GM18951 (cell line): ENCODE measurements at regions of chr3 and their contacts with region 1.

Region 1: GRCh38 chr3:19866751-19867347 is 67.2 kb downstream of the EFHB start:
- POLR2A ChIP-seq: no peak

Region 2: GRCh38 chr3:19052874-19053273 is 814.0 kb before region 1 on chr3:
- in situ Hi-C with region 1: no loop called
- POLR2A ChIP-seq: no peak

Region 3: GRCh38 chr3:19357947-19358346 is 508.9 kb before region 1 on chr3:
- in situ Hi-C with region 1: loop called (anchors 10 kb)
- POLR2A ChIP-seq: no peak

Region 4: DNA sequence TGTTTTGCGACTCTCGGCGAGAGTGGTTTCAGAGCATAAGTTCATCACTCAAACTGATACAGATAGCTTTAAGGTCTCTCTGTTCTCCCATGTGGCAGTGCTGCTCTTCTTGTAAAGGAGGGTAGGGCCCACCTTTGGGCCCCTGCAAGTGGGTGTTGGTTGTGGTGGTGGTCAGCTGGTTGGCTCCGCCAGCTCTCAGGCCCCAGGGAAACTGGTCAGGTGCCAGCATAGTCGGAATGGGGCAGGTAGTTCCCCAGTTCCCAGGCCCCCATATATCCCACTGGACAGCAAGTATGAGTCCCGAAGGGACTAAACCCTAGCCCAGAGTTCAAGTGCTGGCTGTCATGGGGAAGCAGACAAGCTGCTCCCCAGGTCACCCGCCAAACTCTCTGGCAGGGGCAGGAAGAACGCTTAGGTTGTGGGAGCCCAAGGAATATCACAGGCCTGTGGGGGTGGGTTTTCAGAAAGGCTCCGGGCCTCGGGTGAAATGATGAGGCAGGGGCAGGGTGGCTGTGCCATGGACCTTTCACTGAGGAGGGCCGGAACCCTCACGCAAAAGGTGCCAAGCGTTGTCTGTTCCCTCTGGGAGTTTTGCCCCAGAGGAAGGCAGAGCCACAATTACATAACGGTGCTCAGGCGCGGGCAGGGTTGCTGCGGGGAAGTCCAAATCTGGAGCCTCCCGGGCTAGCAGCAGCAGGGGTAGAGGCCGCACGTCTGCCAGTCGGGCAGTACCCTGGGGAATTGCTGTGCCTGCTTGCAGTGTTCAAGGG is 117.9 kb before region 1 on chr3:
- in situ Hi-C with region 1: no loop called
- POLR2A ChIP-seq: no peak

Region 5: GRCh38 chr3:20232906-20233780 is 366.3 kb after region 1 on chr3:
- in situ Hi-C with region 1: no loop called
- POLR2A ChIP-seq: no peak

Region 6: GRCh38 chr3:20264934-20265567 is 398.2 kb after region 1 on chr3:
- in situ Hi-C with region 1: no loop called
- POLR2A ChIP-seq: no peak